AG04449 (cell line): ENCODE measurements at regions of chr1 and their contacts with region 1.

Region 1: GRCh38 chr1:37682334-37682987 is 9.9 kb upstream of the CDCA8 start:
- DNase-seq: no peak
- H3K4me3 ChIP-seq: no peak overlapping the region
- CTCF ChIP-seq: peak; percentile 79

Region 2: DNA sequence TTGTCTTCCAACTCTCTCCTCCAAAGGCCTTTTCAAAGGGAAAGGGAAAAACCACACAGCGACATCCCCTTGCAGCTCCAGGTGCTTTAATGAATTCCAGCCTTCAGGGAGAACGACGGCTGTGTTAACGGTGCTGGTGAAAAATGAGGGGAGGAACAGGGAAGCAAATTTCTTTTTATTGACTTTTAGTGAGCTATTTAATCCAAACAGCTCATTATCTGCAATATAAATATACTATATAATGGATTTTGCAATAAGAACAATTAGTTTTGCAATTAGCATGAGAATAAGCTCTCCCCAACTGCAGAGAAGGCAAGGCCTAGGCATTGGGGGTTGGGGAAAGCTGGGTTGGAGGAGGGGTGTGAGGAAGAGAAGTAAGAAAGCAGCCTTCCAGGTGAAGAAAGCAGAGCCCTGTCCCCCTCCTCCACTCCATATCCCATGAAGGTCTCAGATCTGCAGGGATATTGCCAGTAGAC is 367.1 kb before region 1 on chr1:
- CTCF ChIA-PET with region 1: no interaction called
- POLR2A ChIA-PET with region 1: no interaction called
- DNase-seq: no peak
- H3K4me3 ChIP-seq: no peak overlapping the region
- CTCF ChIP-seq: no peak

Region 3: DNA sequence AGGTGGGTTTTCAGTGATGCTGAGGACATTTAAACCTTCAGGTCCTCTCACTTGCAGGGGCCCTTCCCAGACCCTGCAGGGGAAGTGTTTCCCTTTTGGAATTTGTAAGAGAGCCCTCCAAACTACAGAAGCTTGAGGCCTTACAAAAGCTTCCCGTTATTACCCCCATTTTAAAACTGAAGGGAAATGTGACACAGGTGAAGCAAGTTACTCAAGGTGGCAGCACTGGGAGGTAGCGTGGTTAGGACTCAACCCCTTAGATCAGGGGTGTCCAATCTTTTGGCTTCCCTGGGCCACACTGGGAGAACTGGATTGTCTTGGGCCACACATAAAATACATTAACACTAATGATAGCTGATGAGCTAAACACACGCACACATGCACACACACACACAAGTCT is 223.9 kb before region 1 on chr1:
- CTCF ChIA-PET with region 1: interaction called, 87 read pairs
- POLR2A ChIA-PET with region 1: no interaction called
- DNase-seq: no peak
- H3K4me3 ChIP-seq: no peak overlapping the region
- CTCF ChIP-seq: no peak

Region 4: DNA sequence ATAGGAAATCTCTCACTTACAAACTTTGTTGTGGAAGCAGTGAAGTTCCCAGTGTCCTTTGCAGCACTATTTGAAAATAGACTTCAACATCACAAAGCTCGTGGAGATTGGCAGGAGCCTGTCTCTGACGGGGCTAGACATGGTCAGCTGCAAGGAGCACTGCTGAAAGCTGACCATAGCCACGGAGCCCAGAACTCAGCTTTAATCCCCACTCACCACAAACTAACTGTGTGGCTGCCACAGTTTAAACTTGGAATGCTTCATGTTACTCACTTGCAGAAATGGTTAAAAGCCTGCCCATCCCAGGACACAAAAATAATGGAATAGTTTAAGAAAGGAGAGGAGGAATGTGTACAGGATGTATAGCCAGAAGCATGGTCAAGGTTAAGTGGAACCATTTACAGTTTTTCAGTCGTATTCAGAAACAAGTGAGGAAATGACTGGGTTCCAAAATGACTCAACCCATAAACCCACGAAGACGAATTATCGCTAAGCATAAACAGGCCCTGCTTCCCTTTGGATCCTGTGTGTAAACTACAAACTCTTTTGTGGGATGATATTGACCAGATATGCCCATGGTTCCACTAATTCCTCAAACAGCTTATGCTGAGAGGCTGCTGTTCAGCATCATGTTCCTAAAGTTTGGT is 107.5 kb before region 1 on chr1:
- CTCF ChIA-PET with region 1: interaction called, 43 read pairs
- POLR2A ChIA-PET with region 1: no interaction called
- DNase-seq: peak; percentile 65
- H3K4me3 ChIP-seq: no peak overlapping the region
- CTCF ChIP-seq: no peak

Region 5: DNA sequence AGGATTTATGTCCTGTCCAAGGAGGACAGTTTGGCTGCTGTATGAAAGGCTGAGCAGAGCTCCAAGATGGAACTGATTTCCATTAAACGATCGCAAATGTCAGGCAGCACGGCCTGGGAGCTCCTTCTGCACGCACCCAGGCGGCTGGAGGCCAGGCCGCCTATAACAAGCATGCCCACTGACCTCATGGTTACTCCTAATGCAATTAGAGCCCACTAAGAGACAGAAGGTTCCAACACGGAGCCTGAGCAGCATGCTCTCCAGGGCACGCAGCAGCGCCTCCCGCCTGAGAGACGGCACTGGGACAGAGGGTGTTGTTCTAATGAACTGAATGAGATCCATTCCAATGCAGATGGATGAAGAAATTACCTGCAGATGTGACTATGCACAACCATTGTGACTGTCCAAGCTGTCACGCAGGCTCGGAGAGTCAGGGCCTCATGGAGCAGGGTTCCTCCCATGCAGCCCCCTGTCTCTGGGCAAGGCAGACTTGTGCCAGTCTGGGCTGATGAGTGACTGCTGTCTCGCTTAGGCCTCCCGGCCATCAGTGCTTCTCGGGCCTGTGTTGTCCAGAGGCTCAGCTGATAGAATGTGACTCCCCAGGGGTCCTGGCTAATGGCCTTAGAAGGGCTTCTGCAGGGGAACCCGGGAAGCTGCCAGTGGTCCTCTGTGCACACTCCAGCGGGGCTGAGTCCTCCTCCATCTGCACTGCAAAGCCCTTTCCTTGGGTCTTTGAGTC is 15.3 kb before region 1 on chr1:
- CTCF ChIA-PET with region 1: interaction called, 21 read pairs
- POLR2A ChIA-PET with region 1: no interaction called
- DNase-seq: no peak
- H3K4me3 ChIP-seq: no peak overlapping the region
- CTCF ChIP-seq: no peak